K562 (cell line): ENCODE measurements at regions of chr10 and their contacts with region 1.

Region 1: DNA sequence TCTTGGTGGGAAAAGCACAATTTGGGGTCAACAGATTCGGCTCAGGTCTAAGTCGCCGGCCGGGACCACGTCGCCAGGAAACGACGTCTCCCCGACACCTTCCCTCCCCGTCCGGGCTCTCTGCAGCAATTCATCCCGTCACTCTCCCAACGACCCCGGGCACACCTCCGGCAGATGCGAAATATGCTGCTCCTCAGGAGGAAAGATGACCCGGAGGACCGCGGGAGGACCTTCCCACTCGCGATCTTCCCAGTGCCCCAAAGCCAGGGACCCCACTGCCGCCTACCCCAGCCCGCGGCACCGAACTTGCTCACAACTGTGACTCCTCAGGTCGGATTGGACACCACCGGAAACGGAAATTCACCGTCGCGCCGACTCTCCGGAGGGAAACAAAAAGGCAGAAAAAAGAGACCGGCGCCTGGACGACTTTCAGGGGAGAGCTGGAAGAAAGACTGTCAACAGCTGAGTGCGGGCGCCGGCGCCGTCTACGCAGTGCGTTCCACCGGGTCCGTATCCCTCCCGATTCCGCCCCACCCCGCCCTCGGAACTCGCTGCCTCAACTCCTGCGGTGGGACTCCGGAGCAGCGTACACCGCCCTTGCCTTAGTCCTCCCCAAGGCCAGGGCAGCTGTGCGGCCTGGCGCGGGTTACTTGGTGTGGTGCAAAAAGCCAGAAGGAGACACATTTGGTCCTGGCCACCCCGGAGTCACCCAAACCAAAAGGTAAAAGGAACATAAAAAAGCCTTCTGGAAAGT is 13.8 kb upstream of the SEC24C start:
- DNase-seq: peak; percentile 63 to 97 (median 78)
- ATAC-seq: peak; percentile 93
- H3K4me3 ChIP-seq: peak overlapping the region; percentile 96
- H3K27ac ChIP-seq: peak overlapping the region; percentile 97
- H3K4me1 ChIP-seq: peaks cover 0 to 22% of the 10 kb centered on the region in 2 experiments; a peak in 3 of 5 replicates
- H3K27me3 ChIP-seq: no peaks in the 10 kb centered on the region
- CTCF ChIP-seq: 0 out of 6 replicates have a peak, but pooled peaks of 1 of the 3 experiments have one; percentile 3
- EP300 ChIP-seq: no peak
- POLR2A ChIP-seq: peak; percentile 99
- RAD21 ChIP-seq: 0 out of 4 replicates have a peak, but pooled peaks of 1 of the 2 experiments have one; percentile 14

Region 2: DNA sequence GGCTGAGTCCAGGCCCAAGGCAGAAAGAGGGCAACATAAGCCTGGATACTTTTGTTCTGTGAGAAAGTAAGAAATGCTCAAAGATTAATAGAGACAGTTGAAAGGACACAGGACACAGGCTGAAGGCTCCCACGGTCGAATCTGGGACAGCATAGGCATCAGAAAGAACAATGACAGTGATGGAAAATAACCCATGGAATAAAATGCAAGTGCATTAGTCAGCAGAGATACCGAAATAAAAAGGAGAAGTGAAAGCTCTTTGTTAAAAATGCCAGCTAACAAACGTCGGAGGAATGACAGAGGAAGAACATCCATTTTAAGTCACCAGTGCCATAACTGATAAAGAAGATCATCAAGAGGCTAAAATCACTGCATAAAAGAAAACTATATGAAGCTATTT is 12.8 kb before region 1 on chr10:
- CTCF ChIA-PET with region 1: no interaction called
- POLR2A ChIA-PET with region 1: interaction called, 24 read pairs
- in situ Hi-C with region 1: no loop called
- intact Hi-C with region 1: no loop called
- DNase-seq: no peak
- ATAC-seq: no peak
- H3K4me3 ChIP-seq: no peak overlapping the region
- H3K27ac ChIP-seq: peak overlapping the region; percentile 8; the same call in 1 of the 3 replicates
- H3K4me1 ChIP-seq: peaks cover 8 to 15% of the 10 kb centered on the region in 2 experiments
- H3K27me3 ChIP-seq: no peaks in the 10 kb centered on the region
- CTCF ChIP-seq: no peak
- EP300 ChIP-seq: no peak
- POLR2A ChIP-seq: no peak
- RAD21 ChIP-seq: no peak

Region 3: GRCh38 chr10:74011770-74012169 is 281.4 kb after region 1 on chr10:
- CTCF ChIA-PET with region 1: no interaction called
- POLR2A ChIA-PET with region 1: no interaction called
- in situ Hi-C with region 1: no loop called
- intact Hi-C with region 1: no loop called
- DNase-seq: peak in 1 of 4 experiments; percentile 84
- ATAC-seq: peak; percentile 50
- H3K4me3 ChIP-seq: no peak overlapping the region
- H3K27ac ChIP-seq: peak overlapping the region; percentile 53; the same call in 2 of the 3 replicates
- H3K4me1 ChIP-seq: peaks cover 32 to 50% of the 10 kb centered on the region in 2 experiments
- H3K27me3 ChIP-seq: no peaks in the 10 kb centered on the region
- CTCF ChIP-seq: no peak
- EP300 ChIP-seq: no peak
- POLR2A ChIP-seq: no peak
- RAD21 ChIP-seq: peak in 1 of 2 experiments; percentile 4; a peak in 1 of 4 replicates